ENCODE measurements at regions of chr3 and their contacts with region 1.

Region 1: GRCh38 chr3:126475413-126476114 is at the start of gene ZXDC:
- DNase-seq: peak; percentile 86 to 99 (median 92)

Region 2: DNA sequence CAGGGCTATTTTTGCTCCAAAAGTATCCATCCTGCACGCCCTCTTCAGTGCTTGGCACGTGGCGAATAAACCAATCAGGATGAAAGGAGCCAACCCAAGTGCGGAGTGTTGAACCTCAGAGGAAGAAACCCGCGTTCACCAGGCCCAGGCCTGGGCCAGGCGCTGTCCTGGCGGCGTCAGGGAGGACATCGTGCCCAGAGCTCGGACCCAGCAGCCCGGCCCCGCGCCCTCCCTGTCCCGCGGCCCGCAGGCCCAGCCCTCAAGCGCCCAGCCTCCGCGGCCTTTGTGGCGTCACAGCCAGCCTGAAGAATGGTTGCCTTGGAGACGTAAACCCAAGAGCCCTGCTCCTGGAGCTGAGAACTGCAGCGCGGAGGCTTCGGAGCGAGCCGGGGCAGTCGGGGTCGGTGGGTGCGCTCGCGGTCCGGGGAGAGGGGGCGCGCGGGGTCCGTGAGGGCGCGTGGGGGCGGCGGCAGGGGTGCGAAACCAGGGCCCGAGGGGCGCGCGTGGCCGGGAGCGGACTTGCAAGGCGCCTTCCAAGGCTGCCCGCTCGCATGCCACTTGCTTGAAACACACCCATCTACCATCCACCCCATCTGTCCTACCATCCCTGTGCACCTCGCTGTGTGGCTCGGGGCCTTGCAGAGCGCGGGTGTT is 80.9 kb before region 1 on chr3 and contains the start of gene CFAP100:
- intact Hi-C with region 1: loop called (anchors 10 kb)
- DNase-seq: peak in 8 of 10 donors; percentile 33 to 91 (median 54)